Mammary epithelial cell (primary cell): ENCODE measurements at regions of chr12 and their contacts with region 1.

Region 1: DNA sequence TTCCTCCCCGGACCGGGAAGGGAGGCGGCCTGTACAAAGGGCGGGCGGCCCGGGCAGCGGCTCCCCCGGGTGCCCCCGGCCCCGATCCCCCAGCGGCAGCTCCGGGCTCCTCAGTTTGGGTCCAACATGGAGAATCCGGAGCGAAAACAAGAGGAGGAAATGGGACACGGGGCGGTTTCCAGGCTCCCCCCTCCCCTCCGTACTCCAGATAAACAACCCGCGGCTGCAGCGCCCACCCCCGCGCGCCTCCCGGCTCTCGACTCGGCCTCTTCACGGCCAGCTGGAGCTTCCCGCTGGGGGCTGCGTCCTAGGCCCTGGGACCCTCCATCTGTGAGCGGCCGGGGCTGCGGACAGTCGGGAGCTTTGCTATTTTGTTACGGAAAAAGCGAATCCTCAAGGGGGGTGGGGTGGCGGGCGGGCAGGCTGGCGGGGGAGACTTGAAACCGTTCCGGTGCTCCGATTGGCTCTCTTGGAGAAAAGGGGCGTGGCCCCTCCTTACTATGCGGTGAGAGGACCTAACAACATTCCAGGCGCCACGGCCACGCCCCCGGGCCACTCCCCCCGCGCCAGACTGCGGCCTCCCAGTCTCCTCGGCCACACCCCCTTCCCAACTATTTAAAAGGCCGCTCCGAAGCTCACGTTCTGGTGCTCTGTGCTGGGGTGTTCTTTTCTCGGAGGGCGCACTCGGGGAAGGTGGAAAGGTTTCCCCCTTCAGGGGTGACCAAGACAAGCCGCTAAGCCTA is at the start of gene CTDSP2:
- DNase-seq: peak; percentile 94
- H3K4me3 ChIP-seq: peak within 1 kb of the TSS; percentile 92 to 96 (median 95)
- H3K27ac ChIP-seq: peak within 1 kb of the TSS; percentile 93
- H3K4me1 ChIP-seq: peaks cover 27% of the 10 kb centered on the region
- H3K27me3 ChIP-seq: no peaks in the 10 kb centered on the region
- CTCF ChIP-seq: no peak
- total RNA-seq, gene CTDSP2: 51.3 to 76.1 TPM

Region 2: DNA sequence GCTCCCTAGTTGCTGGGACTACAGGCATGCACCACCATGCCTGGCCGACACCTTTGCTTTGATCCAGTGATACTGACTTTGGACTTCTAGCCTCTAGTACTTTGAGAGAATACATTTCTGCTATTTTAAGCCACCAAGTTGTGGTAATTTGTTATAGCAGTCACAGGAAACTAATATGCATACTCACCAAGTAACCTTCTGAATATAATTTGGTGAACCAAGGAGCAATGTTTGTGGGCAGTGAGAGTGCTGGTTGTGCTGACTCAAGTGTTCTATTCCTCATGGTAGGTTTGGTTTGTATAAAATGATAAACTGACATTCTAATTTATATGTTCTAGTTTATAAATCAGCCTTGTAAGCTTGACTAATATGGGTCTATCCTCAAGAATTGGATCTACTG is 1961.6 kb before region 1 on chr12:
- CTCF ChIA-PET with region 1: interaction called, 21 read pairs
- dilution Hi-C with region 1: no loop called
- in situ Hi-C with region 1: no loop called
- intact Hi-C with region 1: no loop called
- DNase-seq: no peak
- H3K4me3 ChIP-seq: no peak overlapping the region
- H3K27ac ChIP-seq: no peak overlapping the region
- H3K4me1 ChIP-seq: peaks cover 7% of the 10 kb centered on the region
- H3K27me3 ChIP-seq: no peaks in the 10 kb centered on the region
- CTCF ChIP-seq: no peak

Region 3: DNA sequence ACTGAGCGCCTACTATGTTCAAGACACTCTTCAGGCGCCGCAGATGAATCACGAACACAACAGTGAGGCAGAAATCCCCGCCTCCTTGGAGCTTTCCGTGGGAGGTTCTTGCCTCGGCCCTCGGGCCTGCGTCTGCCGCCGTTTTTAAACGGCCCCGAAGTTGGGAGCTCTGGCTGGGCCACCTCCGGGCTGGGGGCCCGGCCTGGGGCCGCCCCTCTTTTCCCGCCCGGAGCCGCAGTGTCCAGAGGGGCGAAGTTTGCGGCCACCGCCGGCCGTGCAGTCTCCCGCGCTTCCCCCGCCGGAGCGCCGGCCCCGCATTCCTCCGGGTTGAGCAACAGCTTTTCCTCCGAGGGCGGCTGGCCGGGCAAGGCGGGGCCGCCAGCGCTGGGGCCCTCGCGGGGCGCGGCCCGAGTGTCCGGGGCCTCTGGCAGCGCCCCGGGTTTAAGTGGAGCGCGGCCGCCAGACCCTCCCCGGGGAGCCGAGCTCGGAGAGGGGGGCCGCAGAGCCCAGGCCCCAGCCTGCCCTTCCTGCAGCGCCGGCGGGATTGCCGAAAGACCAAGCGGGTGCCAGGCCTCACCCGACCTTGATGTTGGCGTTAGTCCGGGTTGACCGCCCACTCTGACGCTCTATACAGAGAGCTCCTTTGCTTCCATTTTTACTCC is 18.5 kb after region 1 on chr12:
- CTCF ChIA-PET with region 1: interaction called, 5 read pairs
- dilution Hi-C with region 1: no loop called
- in situ Hi-C with region 1: no loop called
- intact Hi-C with region 1: loop called (anchors 1 kb)
- DNase-seq: peak; percentile 74
- H3K4me3 ChIP-seq: peak overlapping the region; percentile 42 to 55 (median 48)
- H3K27ac ChIP-seq: peak overlapping the region; percentile 72
- H3K4me1 ChIP-seq: peaks cover 22% of the 10 kb centered on the region
- H3K27me3 ChIP-seq: no peaks in the 10 kb centered on the region
- CTCF ChIP-seq: no peak

Region 4: DNA sequence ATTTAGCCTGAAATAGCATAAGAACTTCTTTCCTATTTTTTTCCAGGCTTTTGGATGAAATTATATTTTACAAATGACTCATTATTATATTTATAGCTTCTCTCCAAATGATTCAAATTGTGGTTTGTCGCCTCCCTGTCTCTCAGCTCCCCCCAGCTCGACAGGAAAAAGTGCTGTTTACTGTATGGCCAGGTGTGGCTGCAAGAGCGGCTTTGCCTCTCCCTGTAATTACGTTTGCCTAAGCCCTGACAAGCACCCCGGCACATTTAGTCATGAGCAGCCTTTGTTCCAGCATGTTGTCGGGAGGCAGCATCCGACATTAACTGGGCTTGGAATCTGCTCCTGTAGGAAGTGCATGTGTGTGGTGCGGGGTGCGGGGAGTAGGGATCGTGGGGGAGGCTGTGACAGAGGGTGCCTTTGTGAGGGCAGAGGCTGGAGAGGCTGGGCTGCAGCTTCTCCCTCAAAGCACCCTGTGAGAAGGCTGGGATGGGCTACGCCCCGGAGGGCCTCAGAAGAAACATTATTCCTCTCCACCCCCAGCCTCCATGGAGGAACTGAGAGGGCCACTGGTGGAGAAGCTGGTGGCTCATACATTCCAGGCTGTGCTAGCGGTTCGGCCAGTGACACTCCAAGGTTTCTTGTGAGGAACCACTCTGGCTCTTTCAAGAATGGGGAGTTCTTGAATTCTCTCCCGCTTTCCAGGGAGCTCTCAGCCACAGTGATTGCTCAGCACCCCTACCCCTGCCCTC is 41.8 kb after region 1 on chr12:
- CTCF ChIA-PET with region 1: no interaction called
- dilution Hi-C with region 1: no loop called
- in situ Hi-C with region 1: no loop called
- intact Hi-C with region 1: loop called (anchors 1 kb)
- DNase-seq: peak; percentile 98
- H3K4me3 ChIP-seq: peak overlapping the region in 2 of 3 experiments; percentile 11 to 28
- H3K27ac ChIP-seq: peak overlapping the region; percentile 71
- H3K4me1 ChIP-seq: peaks cover 38% of the 10 kb centered on the region
- H3K27me3 ChIP-seq: no peaks in the 10 kb centered on the region
- CTCF ChIP-seq: no peak